Ascending aorta (tissue), 2 donors: ENCODE measurements at regions of chr15 and their contacts with region 1.

Region 1: GRCh38 chr15:39580117-39580484 is 778 bp upstream of the THBS1 start:
- DNase-seq: peak; percentile 76 to 95
- H3K4me3 ChIP-seq: peak overlapping the region; percentile 52 to 66
- H3K27ac ChIP-seq: peak overlapping the region; percentile 83 to 92
- H3K4me1 ChIP-seq: no peaks in the 10 kb centered on the region
- H3K27me3 ChIP-seq: no peaks in the 10 kb centered on the region
- CTCF ChIP-seq: peak; percentile 82 to 98 (median 95)

Region 2: GRCh38 chr15:39132954-39133600 is 447.0 kb before region 1 on chr15:
- intact Hi-C with region 1: loop called (anchors 10 kb)
- DNase-seq: no peak
- H3K4me3 ChIP-seq: no peak overlapping the region
- H3K27ac ChIP-seq: peak overlapping the region in 1 of 2 donors; percentile 45
- H3K4me1 ChIP-seq: peaks cover 0 to 7% of the 10 kb centered on the region in 2 donors
- H3K27me3 ChIP-seq: no peaks in the 10 kb centered on the region
- CTCF ChIP-seq: no peak

Region 3: GRCh38 chr15:39171944-39172368 is 408.1 kb before region 1 on chr15:
- intact Hi-C with region 1: loop called (anchors 2 kb)
- DNase-seq: peak in 1 of 2 donors; percentile 70
- H3K4me3 ChIP-seq: no peak overlapping the region
- H3K27ac ChIP-seq: no peak overlapping the region
- H3K4me1 ChIP-seq: no peaks in the 10 kb centered on the region
- H3K27me3 ChIP-seq: no peaks in the 10 kb centered on the region
- CTCF ChIP-seq: peak; percentile 13 to 30 (median 17)

Region 4: DNA sequence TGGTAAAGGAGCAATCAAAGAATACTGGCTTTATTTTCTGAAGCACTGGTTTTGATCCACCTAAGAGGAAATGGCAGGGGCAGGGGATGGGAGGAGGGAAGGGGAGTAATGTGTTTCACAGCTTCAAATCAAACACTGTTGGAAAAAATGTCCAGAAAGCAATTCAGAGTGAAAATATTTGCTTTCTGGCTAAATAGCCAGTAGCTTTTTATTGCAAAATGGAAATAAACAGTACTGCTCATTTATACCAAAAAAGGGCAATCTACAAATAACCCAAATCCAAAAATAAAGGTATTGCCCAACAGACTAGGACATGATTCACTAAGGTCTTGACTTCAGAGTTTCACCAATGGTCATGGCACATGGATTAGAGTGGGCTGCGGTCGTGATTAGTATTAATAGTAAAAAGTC is 278.5 kb before region 1 on chr15:
- intact Hi-C with region 1: loop called (anchors 1 kb)
- DNase-seq: no peak
- H3K4me3 ChIP-seq: no peak overlapping the region
- H3K27ac ChIP-seq: peak overlapping the region; percentile 52 to 69
- H3K4me1 ChIP-seq: peaks cover 0 to 11% of the 10 kb centered on the region in 2 donors
- H3K27me3 ChIP-seq: no peaks in the 10 kb centered on the region
- CTCF ChIP-seq: no peak

Region 5: DNA sequence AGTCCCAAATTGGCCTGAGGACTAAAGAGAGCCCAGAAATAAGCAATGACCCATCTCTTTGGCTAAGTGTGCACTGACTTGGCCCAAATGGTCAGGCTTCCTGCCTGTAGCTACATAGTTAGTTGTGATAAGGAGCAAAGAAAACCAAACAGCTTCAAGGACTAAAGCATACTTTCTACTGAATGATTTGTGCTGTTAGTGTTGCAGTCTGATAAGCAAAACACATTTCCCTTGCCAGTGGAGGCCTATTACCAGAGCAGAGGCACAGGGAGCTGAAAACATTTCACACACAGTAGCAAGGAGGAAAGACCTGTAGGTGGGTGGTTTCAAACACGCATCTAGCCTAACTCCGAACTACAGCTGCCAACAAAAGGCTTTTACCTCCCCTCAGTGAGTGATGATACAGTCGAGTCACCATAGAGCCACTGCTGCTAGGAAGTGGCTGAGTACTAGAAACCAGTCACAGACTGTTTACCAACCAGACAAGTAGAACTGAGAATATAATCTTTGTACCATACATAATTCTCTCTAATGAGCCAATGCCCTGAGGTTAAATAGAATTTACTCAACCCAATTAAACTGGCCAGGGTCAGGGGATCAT is 221.6 kb before region 1 on chr15:
- intact Hi-C with region 1: loop called (anchors 5 kb)
- DNase-seq: peak in 1 of 2 donors; percentile 73
- H3K4me3 ChIP-seq: no peak overlapping the region
- H3K27ac ChIP-seq: peak overlapping the region in 1 of 2 donors; percentile 52
- H3K4me1 ChIP-seq: peaks cover 0 to 6% of the 10 kb centered on the region in 2 donors
- H3K27me3 ChIP-seq: no peaks in the 10 kb centered on the region
- CTCF ChIP-seq: no peak